ENCODE measurements at regions of chr12 and their contacts with region 1.

Region 1: GRCh38 chr12:4719821-4720636 is at the start of gene GALNT8:
- DNase-seq: no peak
- total RNA-seq, gene GALNT8: 1.9 to 2.6 TPM

Region 2: DNA sequence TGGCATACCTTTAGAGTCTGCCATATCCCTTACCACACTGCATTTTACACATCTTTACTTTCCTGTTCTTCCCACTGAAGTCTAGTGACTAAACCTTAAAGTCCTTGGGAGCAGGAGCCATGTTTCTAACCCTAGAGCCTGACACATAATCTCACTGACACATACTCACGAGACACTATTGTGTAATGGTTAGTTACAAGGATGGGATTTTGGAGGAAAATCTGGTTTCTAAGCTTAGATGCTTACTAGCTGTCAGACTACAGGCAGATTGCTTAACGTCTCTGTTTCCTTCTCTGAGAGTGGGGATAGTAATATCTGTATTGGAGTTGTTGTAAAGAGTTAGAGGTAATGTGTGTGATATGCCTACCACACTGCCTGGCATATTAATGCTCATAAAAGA is 164.2 kb before region 1 on chr12:
- intact Hi-C with region 1: no loop called
- DNase-seq: no peak

Region 3: DNA sequence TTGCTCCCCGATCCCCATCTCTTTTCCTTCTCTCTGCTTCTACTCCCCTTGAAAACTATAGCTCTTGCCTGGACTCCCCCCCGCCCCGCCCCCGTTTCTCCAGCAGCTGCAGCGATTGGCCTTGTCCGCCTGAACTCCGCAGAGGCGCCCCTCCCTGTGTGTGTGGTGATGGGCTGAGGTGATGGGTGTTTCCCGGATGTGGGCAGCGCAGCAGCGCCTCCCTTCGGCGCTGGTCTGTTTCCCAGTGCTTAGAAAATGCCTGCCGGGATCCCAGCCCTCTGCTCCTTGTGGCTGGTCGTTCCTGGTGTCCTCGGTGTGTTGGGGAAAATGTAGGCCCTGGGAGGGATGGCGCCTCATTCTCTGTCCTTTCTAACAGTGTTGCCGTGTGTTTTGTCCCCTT is 43.5 kb after region 1 on chr12:
- intact Hi-C with region 1: loop called in 1 of 2 experiments (anchors 1 kb)
- DNase-seq: no peak